ENCODE measurements at regions of chr14 and their contacts with region 1.

Region 1: GRCh38 chr14:49828640-49829039 is 23.9 kb downstream of the NEMF start:
- DNase-seq: no peak
- H3K4me3 ChIP-seq: no peak overlapping the region
- H3K27ac ChIP-seq: no peak overlapping the region
- H3K4me1 ChIP-seq: peaks cover 0 to 6% (median 0%) of the 10 kb centered on the region in 6 donors
- H3K27me3 ChIP-seq: no peaks in the 10 kb centered on the region
- CTCF ChIP-seq: no peak
- POLR2A ChIP-seq: no peak

Region 2: DNA sequence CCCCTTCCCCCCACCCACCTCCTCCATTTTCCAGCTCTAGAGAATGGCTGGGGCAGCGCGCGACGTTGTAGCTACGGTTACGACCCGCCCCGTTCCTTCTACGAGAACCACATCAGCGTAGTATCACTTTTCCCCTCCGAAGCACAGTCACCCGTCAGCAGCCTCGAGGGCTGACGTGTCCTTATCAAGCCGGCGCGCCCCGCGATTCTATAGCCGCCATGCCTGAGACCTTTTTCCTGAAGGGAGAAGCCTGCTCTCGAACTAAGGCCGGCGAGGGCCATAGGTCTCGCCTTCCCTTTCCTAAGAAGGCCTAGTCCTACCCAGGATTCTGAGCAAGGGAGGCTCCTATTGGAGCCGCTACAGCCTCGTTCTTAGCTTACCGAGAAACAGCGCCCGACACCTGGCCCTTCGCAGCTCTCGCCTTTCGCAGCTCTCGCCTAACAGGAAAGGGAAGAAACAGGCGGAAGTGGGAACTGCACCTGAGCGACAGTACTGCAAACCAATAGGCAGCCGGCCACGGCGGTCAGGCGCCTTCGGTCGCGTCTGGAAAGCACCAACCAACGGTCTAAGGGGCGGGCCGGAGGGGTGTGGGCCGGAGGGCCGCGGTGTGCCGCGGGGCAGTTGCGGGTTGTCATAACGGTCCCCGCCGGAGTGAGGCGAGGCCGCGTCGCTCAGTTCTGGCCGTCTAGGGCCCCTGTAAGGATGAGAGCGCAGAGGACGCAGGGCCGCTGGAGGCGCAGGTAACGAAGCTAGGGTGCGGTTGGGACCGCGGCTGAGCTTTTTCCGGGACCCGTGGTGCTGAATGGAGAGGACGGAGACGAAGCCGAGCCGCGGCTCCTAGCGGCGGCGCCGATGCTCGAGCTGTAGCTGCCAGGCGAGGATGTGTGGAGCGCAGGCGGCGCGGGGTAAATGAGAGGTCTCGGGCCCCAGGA is 208.2 kb before region 1 on chr14 and contains the starts of genes MGAT2 and RPL36AL:
- intact Hi-C with region 1: loop called (anchors 10 kb)
- DNase-seq: peak; percentile 98
- H3K4me3 ChIP-seq: peak within 1 kb of the TSS; percentile 82 to 98 (median 88)
- H3K27ac ChIP-seq: peak within 1 kb of the TSS; percentile 86 to 98 (median 97)
- H3K4me1 ChIP-seq: peaks cover 39 to 81% (median 68%) of the 10 kb centered on the region in 6 donors
- H3K27me3 ChIP-seq: no peaks in the 10 kb centered on the region
- CTCF ChIP-seq: peak in 8 of 11 experiments; percentile 24 to 63 (median 42)
- POLR2A ChIP-seq: peak; percentile 71 to 84 (median 76)
- total RNA-seq, gene MGAT2: 33.3 to 43.5 (median 39.7) TPM
- total RNA-seq, gene RPL36AL: 122 to 222 (median 157) TPM